ENCODE measurements at regions of chr16 and their contacts with region 1.

Region 1: GRCh38 chr16:17002565-17002964 is 468.2 kb downstream of the XYLT1 start:
- DNase-seq: no peak
- H3K4me3 ChIP-seq: no peak overlapping the region
- H3K27ac ChIP-seq: no peak overlapping the region
- H3K4me1 ChIP-seq: no peaks in the 10 kb centered on the region
- H3K27me3 ChIP-seq: no peaks in the 10 kb centered on the region
- CTCF ChIP-seq: no peak
- POLR2A ChIP-seq: no peak

Region 2: DNA sequence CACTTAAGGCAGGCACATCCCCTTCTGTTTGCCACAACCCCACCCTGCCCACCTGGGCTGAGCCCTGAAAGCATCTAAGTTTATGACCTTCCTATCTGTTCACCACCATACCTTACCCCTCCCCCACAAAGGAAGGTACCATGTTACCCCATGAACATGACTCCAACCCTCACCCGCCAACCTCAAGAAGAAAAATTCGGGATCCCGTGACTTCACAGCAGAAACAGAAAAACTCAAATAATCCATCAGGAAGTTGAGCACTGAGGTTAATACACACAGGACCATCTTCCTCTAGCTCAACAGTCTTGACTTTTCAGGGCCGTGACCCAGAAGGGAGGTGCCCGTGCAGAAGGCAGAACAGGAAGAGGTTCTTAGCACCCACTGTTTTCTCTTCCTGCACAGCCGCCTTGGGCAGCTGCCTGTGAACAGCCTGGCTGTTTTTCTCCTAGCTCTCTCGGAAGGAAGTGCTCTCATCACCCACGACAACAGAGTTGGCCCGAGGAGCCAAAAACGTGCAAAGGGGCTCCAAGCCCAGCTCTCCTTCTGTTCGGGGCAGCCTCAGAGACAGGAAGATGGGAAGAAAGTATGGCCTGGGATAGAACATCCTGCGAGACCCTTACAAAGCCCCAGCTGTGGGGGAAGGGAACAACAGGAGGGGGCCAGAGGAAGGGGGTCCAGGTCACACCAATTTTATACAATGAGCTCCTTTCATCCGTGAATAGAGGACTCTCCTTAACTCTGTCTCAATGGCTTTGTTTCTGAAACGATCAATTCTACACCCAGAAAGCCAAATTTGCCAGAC is 367.1 kb after region 1 on chr16:
- intact Hi-C with region 1: no loop called
- DNase-seq: peak in 1 of 2 donors; percentile 43
- H3K4me3 ChIP-seq: no peak overlapping the region
- H3K27ac ChIP-seq: peak overlapping the region in 1 of 2 donors; percentile 43
- H3K4me1 ChIP-seq: peaks cover 0 to 7% of the 10 kb centered on the region in 2 donors
- H3K27me3 ChIP-seq: no peaks in the 10 kb centered on the region
- CTCF ChIP-seq: no peak
- POLR2A ChIP-seq: no peak

Region 3: DNA sequence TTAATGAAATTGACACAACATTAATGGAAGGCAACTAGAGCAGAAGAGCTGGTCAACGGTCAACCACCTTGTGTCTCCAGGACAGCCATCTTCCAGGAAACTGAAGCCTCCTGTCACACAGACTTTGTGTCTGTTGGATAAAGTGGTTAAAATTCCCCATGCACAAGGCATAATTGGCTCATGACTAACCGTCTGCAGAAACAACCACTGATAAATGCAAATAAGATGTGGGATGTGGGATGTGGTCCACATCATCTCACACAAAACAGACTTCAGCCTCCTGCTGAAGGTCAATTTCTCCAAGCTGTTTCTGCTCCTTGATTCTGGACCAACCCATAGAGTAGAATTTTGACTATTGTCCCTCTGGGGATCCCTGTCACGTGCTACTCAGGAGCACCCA is 495.1 kb after region 1 on chr16:
- intact Hi-C with region 1: loop called (anchors 10 kb)
- DNase-seq: no peak
- H3K4me3 ChIP-seq: no peak overlapping the region
- H3K27ac ChIP-seq: no peak overlapping the region
- H3K4me1 ChIP-seq: no peaks in the 10 kb centered on the region
- H3K27me3 ChIP-seq: no peaks in the 10 kb centered on the region
- CTCF ChIP-seq: no peak
- POLR2A ChIP-seq: no peak

Measured in breast epithelium (tissue), 4 donors.